ENCODE measurements at regions of chr5 and their contacts with region 1.

Region 1: GRCh38 chr5:16934123-16934522 is 2.0 kb downstream of the MYO10 start:
- DNase-seq: peak; percentile 52 to 61
- ATAC-seq: peak in 5 of 8 donors; percentile 30 to 77 (median 75)
- H3K4me3 ChIP-seq: peak overlapping the region in 9 of 10 donors; percentile 65 to 87 (median 74)
- H3K27ac ChIP-seq: peak overlapping the region in 1 of 10 donors; percentile 77
- H3K4me1 ChIP-seq: peaks cover 0 to 55% (median 18%) of the 10 kb centered on the region in 9 donors
- H3K27me3 ChIP-seq: peaks cover 0 to 69% (median 49%) of the 10 kb centered on the region in 7 donors
- CTCF ChIP-seq: peak; percentile 61 to 86 (median 80)

Region 2: GRCh38 chr5:16437974-16438373 is 496.1 kb before region 1 on chr5:
- intact Hi-C with region 1: no loop called
- DNase-seq: no peak
- ATAC-seq: no peak
- H3K4me3 ChIP-seq: no peak overlapping the region
- H3K27ac ChIP-seq: no peak overlapping the region
- H3K4me1 ChIP-seq: no peaks in the 10 kb centered on the region
- H3K27me3 ChIP-seq: no peaks in the 10 kb centered on the region
- CTCF ChIP-seq: peak in 3 of 9 donors; percentile 6 to 17 (median 13)

Region 3: DNA sequence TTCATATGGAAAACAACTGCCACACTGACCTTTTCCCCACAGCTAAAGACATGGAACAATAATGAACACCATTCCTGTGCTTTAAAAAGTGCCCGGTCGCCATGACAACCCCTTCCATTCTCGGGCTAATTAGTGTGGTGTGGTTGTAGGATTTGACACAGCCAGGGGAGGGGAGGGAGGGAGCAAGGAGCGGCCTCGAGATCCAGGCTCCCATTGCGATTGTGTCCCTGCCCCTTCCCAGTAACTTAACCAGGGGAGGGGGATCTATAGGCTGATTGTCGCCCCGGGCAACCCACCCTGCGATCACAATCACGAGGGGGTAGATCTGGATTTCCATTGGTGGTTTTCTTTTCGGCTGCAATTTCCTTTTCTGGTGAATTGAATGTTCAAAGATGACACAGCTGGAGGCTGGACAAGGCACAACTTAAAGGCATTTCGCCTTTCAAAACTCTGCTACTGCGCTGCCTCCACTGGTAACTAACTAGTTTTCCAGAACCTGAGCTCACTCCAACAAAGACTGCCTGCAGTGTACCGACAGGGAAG is 220.7 kb before region 1 on chr5:
- intact Hi-C with region 1: no loop called
- DNase-seq: no peak
- ATAC-seq: peak in 6 of 8 donors; percentile 28 to 51 (median 36)
- H3K4me3 ChIP-seq: peak overlapping the region in 8 of 10 donors; percentile 10 to 45 (median 29)
- H3K27ac ChIP-seq: peak overlapping the region in 2 of 10 donors; percentile 11 to 18
- H3K4me1 ChIP-seq: peaks cover 0 to 25% (median 4%) of the 10 kb centered on the region in 9 donors
- H3K27me3 ChIP-seq: no peaks in the 10 kb centered on the region
- CTCF ChIP-seq: no peak

Region 4: DNA sequence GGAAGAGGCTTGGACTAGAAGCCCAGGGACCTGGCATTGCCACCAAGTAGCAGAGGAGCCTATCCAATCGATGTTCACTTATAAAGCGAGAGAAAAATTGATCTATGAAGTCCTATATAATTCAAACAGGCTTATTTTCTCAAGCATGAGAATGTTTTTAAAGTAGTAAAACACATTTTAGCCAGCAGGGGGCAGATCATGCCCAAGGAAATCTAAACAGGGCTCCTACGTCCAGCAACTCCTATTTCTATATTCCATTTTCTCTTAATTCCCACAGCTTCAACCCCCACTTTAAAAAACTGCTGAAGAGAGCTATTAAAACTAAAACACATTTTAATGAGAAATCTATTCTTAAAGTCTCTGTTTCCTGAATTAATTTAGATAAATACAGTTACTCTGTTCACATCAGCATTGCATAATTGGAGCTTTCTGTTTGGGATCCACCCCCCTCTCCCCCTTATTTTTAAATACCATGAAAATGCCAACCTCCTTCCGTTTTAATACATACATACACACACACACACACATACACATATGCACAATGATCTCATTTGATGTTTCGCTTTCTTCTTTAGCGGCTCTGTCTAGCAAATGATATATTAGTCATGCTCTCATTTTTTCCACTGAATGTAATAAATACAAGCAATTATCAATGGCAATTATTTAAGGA is 143.0 kb before region 1 on chr5:
- intact Hi-C with region 1: loop called in 5 of 10 experiments (anchors 2 to 10 kb)
- DNase-seq: peak in 1 of 2 donors; percentile 17
- ATAC-seq: peak in 2 of 8 donors; percentile 17 to 59
- H3K4me3 ChIP-seq: no peak overlapping the region
- H3K27ac ChIP-seq: no peak overlapping the region
- H3K4me1 ChIP-seq: peaks cover 0 to 9% (median 0%) of the 10 kb centered on the region in 9 donors
- H3K27me3 ChIP-seq: no peaks in the 10 kb centered on the region
- CTCF ChIP-seq: peak; percentile 67 to 84 (median 77)

Region 5: DNA sequence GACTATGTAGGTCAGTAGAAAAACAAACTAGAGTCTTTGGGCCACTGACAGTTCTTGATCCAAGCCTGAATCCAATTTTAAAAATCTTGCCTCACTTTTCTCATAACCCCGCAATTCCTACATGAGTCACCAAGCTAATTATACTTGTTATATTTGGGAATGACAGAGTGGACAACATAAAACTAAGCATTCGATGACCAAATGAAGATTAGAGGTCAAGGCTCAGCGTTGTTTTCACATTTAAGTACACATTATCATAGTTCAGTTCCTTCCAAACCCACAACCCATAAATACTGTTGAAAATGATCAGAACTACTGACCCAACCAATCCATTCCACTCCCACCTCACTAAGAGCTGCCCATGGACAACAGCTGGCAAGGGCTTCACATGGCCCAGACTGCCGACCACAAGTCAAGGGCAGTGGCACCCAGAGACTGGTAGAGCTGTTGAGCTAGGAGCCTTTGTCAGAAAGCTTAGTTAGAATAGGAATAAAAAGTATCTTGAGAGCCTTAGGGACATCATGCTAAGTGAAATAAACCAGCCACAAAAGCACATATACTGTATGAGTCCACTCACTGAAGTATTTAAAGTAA is 62.3 kb before region 1 on chr5:
- intact Hi-C with region 1: no loop called
- DNase-seq: no peak
- ATAC-seq: peak in 1 of 8 donors; percentile 19
- H3K4me3 ChIP-seq: no peak overlapping the region
- H3K27ac ChIP-seq: no peak overlapping the region
- H3K4me1 ChIP-seq: peaks cover 0 to 6% (median 4%) of the 10 kb centered on the region in 9 donors
- H3K27me3 ChIP-seq: no peaks in the 10 kb centered on the region
- CTCF ChIP-seq: no peak

Region 6: GRCh38 chr5:16970826-16971225 is 36.7 kb after region 1 on chr5:
- intact Hi-C with region 1: no loop called
- DNase-seq: no peak
- ATAC-seq: no peak
- H3K4me3 ChIP-seq: no peak overlapping the region
- H3K27ac ChIP-seq: no peak overlapping the region
- H3K4me1 ChIP-seq: no peaks in the 10 kb centered on the region
- H3K27me3 ChIP-seq: no peaks in the 10 kb centered on the region
- CTCF ChIP-seq: no peak

Region 7: DNA sequence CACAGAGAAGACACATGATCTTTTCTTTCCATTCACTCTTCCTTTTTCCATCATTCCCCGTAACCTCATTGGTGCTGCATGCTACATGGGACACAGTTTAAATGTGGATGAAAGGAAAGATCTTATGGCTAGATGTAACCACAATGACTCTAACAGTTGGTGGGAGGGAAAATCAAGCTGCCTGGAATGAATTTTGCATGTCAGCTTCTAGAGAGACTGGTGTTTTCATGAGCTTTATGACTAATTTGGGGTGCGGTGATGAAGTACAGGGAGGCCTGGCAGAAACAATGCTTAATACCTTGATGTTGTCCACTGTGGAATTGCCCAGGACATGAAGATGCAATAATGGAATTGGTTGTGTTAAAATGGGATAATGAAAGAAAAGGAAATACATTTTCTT is 57.9 kb after region 1 on chr5:
- intact Hi-C with region 1: loop called in 1 of 10 experiments (anchors 2 kb)
- DNase-seq: no peak
- ATAC-seq: no peak
- H3K4me3 ChIP-seq: no peak overlapping the region
- H3K27ac ChIP-seq: no peak overlapping the region
- H3K4me1 ChIP-seq: peaks cover 0 to 17% (median 3%) of the 10 kb centered on the region in 9 donors
- H3K27me3 ChIP-seq: no peaks in the 10 kb centered on the region
- CTCF ChIP-seq: no peak

Region 8: DNA sequence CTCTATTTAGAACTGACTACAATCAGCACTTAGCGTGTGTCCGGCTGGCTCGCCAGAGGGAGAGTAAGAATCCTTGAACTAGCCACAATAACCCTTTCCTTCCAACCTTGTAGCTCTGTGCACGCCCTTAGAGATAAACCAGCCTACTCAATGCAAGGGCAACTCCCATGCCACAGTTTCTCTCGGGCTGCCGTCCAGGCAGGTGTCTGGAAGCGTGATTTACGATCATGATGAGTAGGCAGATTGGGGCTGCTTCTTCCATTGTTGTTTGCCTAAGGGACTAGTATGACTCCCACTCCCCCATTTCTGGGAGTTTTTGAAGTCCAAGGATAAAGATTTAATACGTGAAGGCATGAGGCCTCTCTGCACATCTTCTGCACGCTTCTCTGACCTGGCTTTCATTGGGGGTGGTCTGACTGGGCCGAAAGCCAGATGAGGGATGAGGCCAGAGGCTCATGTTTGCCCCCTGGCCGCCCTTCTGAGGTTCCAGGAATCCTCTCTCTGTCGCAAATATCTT is 135.9 kb after region 1 on chr5:
- intact Hi-C with region 1: loop called in 2 of 10 experiments (anchors 5 to 10 kb)
- DNase-seq: no peak
- ATAC-seq: peak in 4 of 8 donors; percentile 42 to 74 (median 67)
- H3K4me3 ChIP-seq: no peak overlapping the region
- H3K27ac ChIP-seq: peak overlapping the region in 4 of 10 donors; percentile 16 to 45 (median 37)
- H3K4me1 ChIP-seq: peaks cover 0 to 29% (median 14%) of the 10 kb centered on the region in 9 donors
- H3K27me3 ChIP-seq: no peaks in the 10 kb centered on the region
- CTCF ChIP-seq: no peak

Region 9: GRCh38 chr5:17079562-17079961 is 145.4 kb after region 1 on chr5:
- intact Hi-C with region 1: loop called in 2 of 10 experiments (anchors 5 to 10 kb)
- DNase-seq: peak in 1 of 2 donors; percentile 72
- ATAC-seq: peak; percentile 70 to 96 (median 88)
- H3K4me3 ChIP-seq: peak overlapping the region in 2 of 10 donors; percentile 1 to 20
- H3K27ac ChIP-seq: peak overlapping the region in 4 of 10 donors; percentile 1 to 74 (median 46)
- H3K4me1 ChIP-seq: peaks cover 0 to 44% (median 11%) of the 10 kb centered on the region in 9 donors
- H3K27me3 ChIP-seq: no peaks in the 10 kb centered on the region
- CTCF ChIP-seq: no peak

Measured in heart right ventricle (tissue), 16 donors.